ENCODE measurements at regions of chr18 and their contacts with region 1.

Region 1: DNA sequence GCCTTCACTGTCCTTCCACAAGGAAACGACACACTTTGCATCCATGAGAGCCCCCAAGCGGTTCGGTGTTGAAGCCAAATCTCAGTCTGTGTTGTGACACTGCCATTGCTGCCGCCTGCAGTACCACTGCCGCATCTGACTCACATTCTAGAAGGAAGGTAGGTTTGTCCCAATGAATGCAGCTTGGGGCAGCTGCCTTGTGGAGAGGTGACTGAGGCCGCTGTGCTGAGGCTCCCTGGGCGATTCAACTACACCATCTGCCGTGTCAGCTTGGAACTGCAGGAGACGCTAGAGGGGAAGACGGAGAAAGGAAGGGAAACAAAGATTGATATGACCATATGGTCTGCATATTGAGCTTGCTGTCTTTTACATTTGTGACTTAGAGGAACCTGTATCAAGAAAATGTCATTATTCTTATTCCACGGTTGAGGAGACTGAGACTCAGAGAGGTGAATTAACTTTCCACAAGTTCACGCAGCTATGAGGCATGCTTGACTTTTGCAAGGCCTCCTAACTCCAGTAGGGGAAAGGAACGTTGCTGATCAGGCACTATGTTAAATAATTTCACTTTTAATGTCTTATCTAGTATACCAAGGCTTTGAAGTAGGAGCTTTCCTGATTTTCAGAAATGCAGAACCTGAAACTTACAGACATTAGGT is 43.5 kb upstream of the LMAN1 start:
- DNase-seq: peak; percentile 83

Region 2: GRCh38 chr18:59085797-59086196 is 316.8 kb before region 1 on chr18:
- CTCF ChIA-PET with region 1: interaction called, 12 read pairs
- POLR2A ChIA-PET with region 1: no interaction called
- DNase-seq: no peak

Region 3: GRCh38 chr18:59249205-59249774 is 153.3 kb before region 1 on chr18:
- CTCF ChIA-PET with region 1: interaction called, 43 read pairs
- POLR2A ChIA-PET with region 1: interaction called, 3 read pairs
- DNase-seq: peak; percentile 46

Region 4: DNA sequence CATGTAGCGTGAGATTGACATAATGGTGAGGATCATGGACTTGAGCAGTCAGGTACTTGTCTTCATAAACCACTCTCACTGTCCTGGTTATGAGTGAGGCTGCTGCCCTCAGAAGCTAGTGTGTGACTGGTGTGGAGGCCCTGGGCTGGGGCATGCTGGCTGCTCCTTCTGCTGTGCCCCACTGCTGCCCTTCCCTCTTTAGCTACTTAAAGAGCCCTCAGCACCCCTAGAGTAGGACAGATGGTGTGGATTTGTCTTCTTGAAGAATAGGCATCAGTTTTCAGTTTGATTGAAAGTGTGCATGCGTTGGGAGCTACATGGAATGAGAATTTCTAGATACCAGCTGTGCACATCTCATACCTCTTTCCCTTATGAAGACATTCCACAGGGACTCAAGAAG is 99.6 kb before region 1 on chr18:
- CTCF ChIA-PET with region 1: interaction called, 32 read pairs
- POLR2A ChIA-PET with region 1: no interaction called
- DNase-seq: no peak

Region 5: DNA sequence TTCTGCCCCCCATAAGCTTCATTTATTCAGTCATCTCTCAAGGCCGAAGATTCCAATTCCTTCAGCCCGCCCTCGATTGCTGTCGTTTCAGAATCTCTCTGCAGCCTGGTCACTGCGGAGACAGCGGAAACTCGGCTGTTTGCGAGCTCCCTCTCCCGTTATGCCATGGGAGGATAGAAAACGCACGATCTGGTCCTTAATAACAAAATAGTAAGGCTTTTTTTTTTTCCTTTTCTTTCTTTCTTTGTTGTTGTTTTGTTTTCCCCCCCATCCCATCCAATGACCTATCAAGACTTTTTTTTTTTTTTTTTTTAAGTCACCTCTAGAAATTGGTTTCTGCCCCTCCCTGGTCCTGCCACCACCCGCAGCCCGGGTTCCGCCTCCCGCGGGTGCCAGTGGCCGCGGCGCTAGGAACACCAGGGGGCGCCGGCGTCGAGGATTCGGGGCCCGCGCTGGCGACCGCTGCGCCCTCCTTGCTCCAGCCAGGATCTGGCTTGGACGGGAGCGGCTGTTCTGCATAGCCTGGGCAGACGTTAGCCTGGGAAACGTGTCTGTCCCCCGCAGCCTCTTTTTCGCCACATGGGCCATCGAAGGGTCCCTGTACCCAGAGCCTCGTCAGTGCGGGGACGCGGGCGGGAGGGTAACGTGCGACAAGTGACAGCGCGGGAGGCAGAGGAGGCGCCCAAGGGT is 94.2 kb before region 1 on chr18:
- CTCF ChIA-PET with region 1: interaction called, 32 read pairs
- POLR2A ChIA-PET with region 1: no interaction called
- DNase-seq: peak; percentile 75

Region 6: DNA sequence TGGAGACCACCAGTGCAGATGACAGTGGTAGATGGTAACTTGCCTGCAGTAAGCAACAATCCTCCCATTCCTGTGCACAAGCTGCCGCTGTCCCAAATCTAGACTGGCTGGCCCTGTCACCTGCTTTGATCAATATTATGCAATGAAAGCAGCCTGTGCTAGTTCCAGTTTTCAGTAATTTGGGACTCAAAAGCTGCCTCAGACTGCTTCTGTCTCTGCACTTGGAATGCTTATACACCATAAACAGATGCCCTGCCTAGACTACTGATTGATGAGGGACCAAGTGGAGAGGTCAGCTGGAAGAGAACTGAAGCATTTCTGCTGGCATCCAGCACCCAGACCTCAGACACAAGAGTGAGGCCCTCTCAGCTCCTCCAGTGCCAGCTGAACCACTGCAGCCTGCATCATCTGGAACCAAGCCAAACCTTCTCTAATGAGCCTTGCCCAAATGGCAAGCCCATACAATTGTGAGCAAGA is 269.7 kb after region 1 on chr18:
- CTCF ChIA-PET with region 1: no interaction called
- POLR2A ChIA-PET with region 1: no interaction called
- DNase-seq: no peak